HCT116 (cell line): ENCODE measurements at regions of chr12 and their contacts with region 1.

Region 1: GRCh38 chr12:57111031-57111734 is at the start of gene STAT6:
- DNase-seq: no peak
- ATAC-seq: peak; percentile 60
- H3K4me3 ChIP-seq: peak within 1 kb of the TSS; percentile 80 to 81
- H3K27ac ChIP-seq: peak within 1 kb of the TSS; percentile 91
- H3K4me1 ChIP-seq: peaks cover 11 to 36% of the 10 kb centered on the region in 2 experiments
- H3K27me3 ChIP-seq: no peaks in the 10 kb centered on the region
- CTCF ChIP-seq: no peak; a peak in 1 of 6 replicates
- POLR2A ChIP-seq: no peak
- RAD21 ChIP-seq: no peak
- total RNA-seq, gene STAT6: 78.5 TPM

Region 2: DNA sequence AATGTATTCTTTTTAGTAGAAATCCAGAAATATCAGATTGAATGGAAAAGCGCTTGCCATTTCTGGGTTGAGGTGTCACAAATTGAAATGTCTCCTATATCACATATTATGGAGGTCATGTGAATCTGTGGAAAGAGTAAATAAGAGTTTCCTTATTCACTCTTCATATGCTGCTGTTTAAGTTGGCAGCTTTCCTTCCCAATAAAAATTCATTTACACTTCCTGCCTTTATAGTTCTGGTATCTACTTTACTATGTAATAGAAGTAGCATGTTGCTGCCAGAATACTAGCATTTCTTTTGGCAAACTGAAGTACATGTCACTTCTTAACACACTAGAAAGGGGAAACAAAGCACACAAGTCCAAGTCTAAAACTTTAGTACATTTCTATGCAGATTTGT is 237.8 kb before region 1 on chr12:
- CTCF ChIA-PET with region 1: no interaction called
- POLR2A ChIA-PET with region 1: no interaction called
- RAD21 ChIA-PET with region 1: no interaction called
- intact Hi-C with region 1: no loop called
- DNase-seq: no peak
- ATAC-seq: no peak
- H3K4me3 ChIP-seq: no peak overlapping the region
- H3K27ac ChIP-seq: no peak overlapping the region
- H3K4me1 ChIP-seq: no peaks in the 10 kb centered on the region
- H3K27me3 ChIP-seq: no peaks in the 10 kb centered on the region
- CTCF ChIP-seq: no peak
- POLR2A ChIP-seq: no peak
- RAD21 ChIP-seq: no peak

Region 3: GRCh38 chr12:57078519-57079404 is 32.4 kb before region 1 on chr12 and contains the start of gene NEMP1:
- CTCF ChIA-PET with region 1: interaction called, 17 read pairs
- POLR2A ChIA-PET with region 1: interaction called, 20 read pairs
- RAD21 ChIA-PET with region 1: interaction called, 7 to 8 read pairs
- intact Hi-C with region 1: no loop called
- DNase-seq: peak; percentile 100
- ATAC-seq: peak; percentile 98
- H3K4me3 ChIP-seq: peak within 1 kb of the TSS; percentile 97 to 98
- H3K27ac ChIP-seq: peak within 1 kb of the TSS; percentile 89
- H3K4me1 ChIP-seq: peaks cover 7 to 16% of the 10 kb centered on the region in 2 experiments; a peak in 3 of 4 replicates
- H3K27me3 ChIP-seq: no peaks in the 10 kb centered on the region
- CTCF ChIP-seq: no peak
- POLR2A ChIP-seq: peak; percentile 26
- RAD21 ChIP-seq: no peak
- total RNA-seq, gene NEMP1: 35.2 TPM

Region 4: GRCh38 chr12:57088459-57089248 is 22.5 kb before region 1 on chr12 and contains the start of gene NAB2:
- CTCF ChIA-PET with region 1: interaction called, 32 read pairs
- POLR2A ChIA-PET with region 1: interaction called, 50 read pairs
- RAD21 ChIA-PET with region 1: interaction called, 7 to 8 read pairs
- intact Hi-C with region 1: loop called (anchors 1 kb)
- DNase-seq: peak; percentile 85
- ATAC-seq: peak; percentile 71
- H3K4me3 ChIP-seq: peak within 1 kb of the TSS; percentile 61 to 90
- H3K27ac ChIP-seq: peak within 1 kb of the TSS; percentile 100
- H3K4me1 ChIP-seq: peaks cover 38 to 70% of the 10 kb centered on the region in 2 experiments
- H3K27me3 ChIP-seq: no peaks in the 10 kb centered on the region
- CTCF ChIP-seq: no peak
- POLR2A ChIP-seq: peak; percentile 20
- RAD21 ChIP-seq: no peak
- total RNA-seq, gene NAB2: 77.1 TPM

Region 5: DNA sequence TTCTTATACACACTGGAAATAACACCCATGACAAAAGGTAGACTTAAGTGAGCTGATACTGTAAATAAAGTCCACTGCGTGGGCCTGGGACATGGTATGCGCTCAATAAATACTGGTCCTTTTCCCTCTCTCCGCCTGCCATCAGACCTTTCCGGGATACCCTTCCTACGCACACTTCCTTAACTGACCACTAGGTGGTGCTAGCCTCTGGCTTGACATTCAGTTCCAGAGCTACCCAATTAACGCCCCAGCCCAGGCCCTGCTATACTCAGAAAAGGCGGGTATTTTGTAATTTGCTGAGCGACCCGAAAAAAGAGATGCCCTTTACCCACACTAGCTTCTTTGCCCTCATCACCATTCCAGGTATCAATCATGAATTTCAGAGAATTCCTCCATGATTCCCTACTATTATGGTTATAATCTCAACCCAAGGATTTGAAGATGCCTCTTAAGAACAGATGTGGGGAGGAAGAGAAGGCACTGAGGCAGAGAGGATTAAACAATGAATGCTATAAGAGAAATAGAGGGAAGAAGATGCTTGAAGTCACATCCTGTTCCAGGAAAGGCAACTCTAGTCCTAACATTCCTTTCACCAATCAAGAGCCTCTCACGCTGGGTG is 13.2 kb after region 1 on chr12:
- CTCF ChIA-PET with region 1: interaction called, 44 read pairs
- POLR2A ChIA-PET with region 1: interaction called, 20 read pairs
- RAD21 ChIA-PET with region 1: interaction called, 9 read pairs
- intact Hi-C with region 1: no loop called
- DNase-seq: peak; percentile 56
- ATAC-seq: peak; percentile 56
- H3K4me3 ChIP-seq: no peak overlapping the region
- H3K27ac ChIP-seq: no peak overlapping the region
- H3K4me1 ChIP-seq: peaks cover 9 to 27% of the 10 kb centered on the region in 2 experiments
- H3K27me3 ChIP-seq: no peaks in the 10 kb centered on the region
- CTCF ChIP-seq: peak; percentile 88 to 94 (median 92)
- POLR2A ChIP-seq: no peak
- RAD21 ChIP-seq: peak; percentile 84

Region 6: DNA sequence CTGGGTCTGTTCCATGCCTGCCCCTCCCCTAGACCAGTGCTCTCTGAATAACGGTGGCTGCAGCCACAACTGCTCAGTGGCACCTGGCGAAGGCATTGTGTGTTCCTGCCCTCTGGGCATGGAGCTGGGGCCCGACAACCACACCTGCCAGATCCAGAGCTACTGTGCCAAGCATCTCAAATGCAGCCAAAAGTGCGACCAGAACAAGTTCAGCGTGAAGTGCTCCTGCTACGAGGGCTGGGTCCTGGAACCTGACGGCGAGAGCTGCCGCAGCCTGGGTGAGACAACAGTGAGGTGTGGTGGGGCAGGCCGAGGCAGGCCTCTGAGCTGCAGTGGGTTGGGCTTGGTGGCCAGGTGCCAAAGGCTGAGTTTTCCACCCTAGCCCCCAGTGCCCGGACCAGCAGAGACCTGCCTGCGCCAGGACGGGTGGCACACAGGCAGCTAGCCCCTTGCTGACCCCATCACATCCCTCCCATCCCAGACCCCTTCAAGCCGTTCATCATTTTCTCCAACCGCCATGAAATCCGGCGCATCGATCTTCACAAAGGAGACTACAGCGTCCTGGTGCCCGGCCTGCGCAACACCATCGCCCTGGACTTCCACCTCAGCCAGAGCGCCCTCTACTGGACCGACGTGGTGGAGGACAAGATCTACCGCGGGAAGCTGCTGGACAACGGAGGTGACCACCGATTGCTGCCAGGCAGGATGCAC is 64.4 kb after region 1 on chr12:
- CTCF ChIA-PET with region 1: interaction called, 10 read pairs
- POLR2A ChIA-PET with region 1: interaction called, 4 read pairs
- RAD21 ChIA-PET with region 1: interaction called in 1 of 2 experiments, 3 read pairs
- intact Hi-C with region 1: no loop called
- DNase-seq: peak; percentile 73
- ATAC-seq: peak; percentile 90
- H3K4me3 ChIP-seq: peak overlapping the region in 1 of 2 experiments; percentile 29; a peak in 2 of 4 replicates
- H3K27ac ChIP-seq: peak overlapping the region; percentile 61
- H3K4me1 ChIP-seq: peaks cover 18 to 28% of the 10 kb centered on the region in 2 experiments
- H3K27me3 ChIP-seq: no peaks in the 10 kb centered on the region
- CTCF ChIP-seq: peak; percentile 83 to 87 (median 86)
- POLR2A ChIP-seq: no peak
- RAD21 ChIP-seq: peak; percentile 75